PC-9 (cell line): ENCODE measurements at regions of chr1 and their contacts with region 1.

Region 1: GRCh38 chr1:206741142-206741701 is 29.4 kb upstream of the IL19 start:
- DNase-seq: no peak
- H3K4me3 ChIP-seq: no peak overlapping the region
- H3K27ac ChIP-seq: no peak overlapping the region
- H3K4me1 ChIP-seq: no peaks in the 10 kb centered on the region
- H3K27me3 ChIP-seq: no peaks in the 10 kb centered on the region
- CTCF ChIP-seq: no peak

Region 2: DNA sequence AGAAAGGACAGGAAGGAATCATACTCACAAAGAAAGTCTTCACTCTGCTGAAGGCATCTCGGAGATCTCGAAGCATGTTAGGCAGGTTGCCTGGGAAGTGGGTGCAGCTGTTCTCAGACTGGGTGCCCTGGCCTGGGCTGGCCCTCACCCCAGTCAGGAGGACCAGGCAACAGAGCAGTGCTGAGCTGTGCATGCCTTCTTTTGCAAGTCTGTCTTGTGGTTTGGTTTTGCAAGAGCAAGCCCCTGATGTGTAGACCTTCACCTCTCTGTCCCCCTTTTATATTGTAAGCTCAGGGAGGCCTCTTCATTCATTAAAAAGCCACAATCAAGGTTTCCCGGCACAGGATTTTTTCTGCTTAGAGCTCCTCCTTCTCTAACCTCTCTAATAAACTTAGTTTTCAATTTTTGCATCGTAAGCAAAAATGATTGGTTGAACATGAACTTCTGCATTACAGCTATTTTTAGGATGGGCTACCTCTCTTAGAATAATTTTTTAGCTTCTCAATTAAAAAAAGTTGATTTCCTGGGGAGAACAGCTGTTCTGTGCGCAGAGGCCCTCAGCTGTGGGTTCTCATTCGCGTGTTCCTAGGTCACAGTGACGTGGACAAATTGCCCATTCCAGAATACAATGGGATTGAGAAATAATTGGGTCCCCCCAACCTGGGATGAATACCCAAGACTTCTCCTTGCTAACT is 31.2 kb after region 1 on chr1 and contains the start of gene IL10:
- CTCF ChIA-PET with region 1: interaction called, 3 read pairs
- POLR2A ChIA-PET with region 1: interaction called, 12 read pairs
- intact Hi-C with region 1: no loop called
- DNase-seq: no peak
- H3K4me3 ChIP-seq: no peak within 1 kb of the TSS
- H3K27ac ChIP-seq: no peak within 1 kb of the TSS
- H3K4me1 ChIP-seq: peaks cover 10% of the 10 kb centered on the region; the same call in 1 of the 2 replicates
- H3K27me3 ChIP-seq: peaks cover 9% of the 10 kb centered on the region; the same call in 1 of the 2 replicates
- CTCF ChIP-seq: no peak
- total RNA-seq, gene IL10: not detected in 2 replicates

Region 3: DNA sequence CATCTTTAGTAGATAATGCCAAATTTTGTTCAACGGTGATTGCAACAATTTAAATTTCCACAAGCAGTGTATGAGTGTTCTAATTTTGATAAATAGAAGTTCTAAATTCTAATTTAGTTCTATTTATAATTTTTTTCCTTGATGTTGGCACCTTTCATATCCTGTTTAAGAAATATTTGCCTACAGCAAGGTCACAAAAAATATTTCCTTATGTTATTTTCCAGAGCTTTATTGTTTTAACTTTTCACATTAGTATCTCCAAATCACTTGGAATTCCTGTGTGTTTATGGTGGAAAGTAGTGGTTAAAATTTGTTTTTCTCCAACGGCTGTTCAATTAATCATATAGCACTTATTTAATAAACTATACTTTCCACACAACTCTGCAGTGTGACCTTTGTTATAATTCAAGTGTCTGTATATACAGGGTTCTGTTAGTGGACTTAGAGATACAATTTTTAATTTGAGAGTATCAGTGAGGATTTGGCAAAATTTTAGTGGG is 486.0 kb after region 1 on chr1:
- CTCF ChIA-PET with region 1: no interaction called
- POLR2A ChIA-PET with region 1: no interaction called
- intact Hi-C with region 1: no loop called
- DNase-seq: no peak
- H3K4me3 ChIP-seq: no peak overlapping the region
- H3K27ac ChIP-seq: no peak overlapping the region
- H3K4me1 ChIP-seq: peaks cover 19% of the 10 kb centered on the region
- H3K27me3 ChIP-seq: no peaks in the 10 kb centered on the region
- CTCF ChIP-seq: no peak